Activated CD4-positive, alpha-beta T cell treated with anti-CD3 and anti-CD28 coated beads for 36 hours (primary cell): ENCODE measurements at regions of chr1 and their contacts with region 1.

Region 1: GRCh38 chr1:161766102-161766981 is at the start of gene ATF6:
- DNase-seq: peak; percentile 89
- ATAC-seq: peak; percentile 68
- H3K4me3 Mint-ChIP-seq: peak within 1 kb of the TSS; percentile 96
- H3K27ac Mint-ChIP-seq: peak within 1 kb of the TSS; percentile 99
- H3K4me1 Mint-ChIP-seq: peaks cover 49% of the 10 kb centered on the region
- H3K27me3 Mint-ChIP-seq: no peaks in the 10 kb centered on the region
- total RNA-seq, gene ATF6: 23.7 to 31.9 TPM

Region 2: DNA sequence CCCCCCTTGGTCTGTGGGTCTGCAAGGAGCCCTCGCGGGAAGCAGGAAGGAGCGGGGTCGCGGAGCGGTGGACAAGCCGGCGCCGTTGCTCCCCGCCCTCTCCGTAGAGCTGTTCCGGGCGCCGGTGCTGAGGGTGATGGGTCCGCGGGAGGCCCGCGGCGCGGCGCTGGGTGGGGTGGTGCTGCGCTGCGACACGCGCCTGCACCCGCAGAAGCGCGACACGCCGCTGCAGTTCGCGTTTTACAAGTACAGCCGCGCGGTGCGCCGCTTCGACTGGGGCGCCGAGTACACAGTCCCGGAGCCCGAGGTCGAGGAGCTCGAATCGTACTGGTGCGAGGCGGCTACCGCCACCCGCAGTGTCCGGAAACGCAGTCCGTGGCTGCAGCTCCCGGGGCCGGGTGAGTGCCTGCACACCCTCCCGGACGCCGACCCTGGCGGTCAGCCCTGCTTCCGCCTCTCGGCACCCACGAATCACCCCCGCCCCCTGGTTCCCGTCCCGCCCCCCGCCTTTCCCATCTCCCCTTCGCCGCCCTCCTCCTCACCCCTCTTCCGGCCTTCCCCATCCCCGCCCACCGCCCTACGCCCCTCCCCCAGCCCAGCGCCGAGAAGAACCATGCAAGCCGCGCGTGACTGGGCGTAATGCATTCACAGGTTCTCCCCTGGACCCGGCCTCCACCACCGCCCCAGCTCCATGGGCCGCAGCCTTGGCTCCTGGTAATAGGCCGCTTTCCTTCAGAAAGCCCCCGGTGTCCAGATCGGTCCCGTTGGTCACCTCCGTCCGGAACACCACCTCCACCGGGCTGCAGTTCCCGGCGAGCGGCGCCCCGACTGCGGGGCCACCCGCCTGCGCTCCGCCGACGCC is 39.5 kb before region 1 on chr1:
- CTCF ChIA-PET with region 1: no interaction called
- POLR2A ChIA-PET with region 1: no interaction called
- intact Hi-C with region 1: loop called in 1 of 2 experiments (anchors 1 kb)
- DNase-seq: peak; percentile 72
- ATAC-seq: peak; percentile 51
- H3K4me3 Mint-ChIP-seq: peak overlapping the region; percentile 73
- H3K27ac Mint-ChIP-seq: no peak overlapping the region
- H3K4me1 Mint-ChIP-seq: peaks cover 47% of the 10 kb centered on the region
- H3K27me3 Mint-ChIP-seq: peaks cover 44% of the 10 kb centered on the region

Region 3: DNA sequence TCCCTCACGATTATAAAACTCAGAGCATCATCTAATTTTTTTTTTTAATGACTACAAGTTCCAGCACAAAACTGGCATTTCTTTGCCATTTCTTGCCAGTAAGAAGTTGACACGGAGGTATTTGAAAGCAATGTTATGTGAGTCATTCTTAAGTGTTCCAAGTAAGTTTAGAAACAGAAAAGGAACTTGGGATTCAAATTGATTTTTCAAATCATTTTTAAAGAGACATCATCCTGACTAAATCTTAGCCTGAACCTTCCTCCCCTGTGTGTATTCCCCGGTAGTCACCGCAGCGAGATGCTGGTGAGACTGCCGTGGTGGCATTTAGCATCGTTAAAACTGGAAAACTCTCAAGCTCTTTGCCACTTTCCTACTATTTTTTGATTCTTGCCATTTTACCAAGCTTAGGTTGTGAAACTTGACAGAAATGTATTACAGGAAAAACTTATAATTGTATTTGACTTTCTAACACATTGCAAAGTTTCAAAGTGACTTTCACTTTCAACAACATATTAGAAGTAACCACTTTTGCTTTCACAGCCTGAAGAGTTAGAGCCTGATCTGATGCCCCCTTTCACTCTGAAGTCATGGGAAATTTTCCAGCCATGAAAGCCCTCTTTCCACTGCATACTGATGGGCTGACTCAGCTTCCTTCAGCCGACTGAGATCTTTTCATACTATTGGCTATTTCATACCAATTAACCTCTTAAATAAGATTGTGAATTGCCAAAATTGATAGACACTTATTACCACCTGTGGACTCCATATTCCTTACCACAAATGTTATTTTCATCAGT is 195.9 kb after region 1 on chr1:
- CTCF ChIA-PET with region 1: no interaction called
- POLR2A ChIA-PET with region 1: no interaction called
- intact Hi-C with region 1: loop called in 1 of 2 experiments (anchors 1 kb)
- DNase-seq: peak; percentile 69
- ATAC-seq: peak; percentile 96
- H3K4me3 Mint-ChIP-seq: peak overlapping the region; percentile 57
- H3K27ac Mint-ChIP-seq: peak overlapping the region; percentile 95
- H3K4me1 Mint-ChIP-seq: peaks cover 59% of the 10 kb centered on the region
- H3K27me3 Mint-ChIP-seq: no peaks in the 10 kb centered on the region

Region 4: DNA sequence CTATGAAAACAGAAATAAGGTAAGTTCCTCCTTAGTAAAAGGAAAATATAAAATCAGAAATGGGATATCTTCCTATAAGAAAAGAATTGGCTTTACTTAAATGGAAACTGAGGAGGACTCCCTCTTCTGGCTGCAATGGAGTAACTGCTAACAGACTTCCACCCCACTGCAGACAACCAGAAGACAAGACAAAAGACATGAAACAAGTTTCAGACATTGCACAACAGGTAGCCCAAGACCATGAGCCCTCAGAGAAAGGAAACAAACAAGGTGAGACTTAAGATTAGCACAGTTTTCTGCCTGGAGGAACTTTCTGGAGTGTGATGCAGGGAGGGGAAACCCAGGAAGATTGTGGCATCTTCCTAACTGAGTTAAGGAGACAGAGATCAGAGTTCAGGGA is 274.3 kb after region 1 on chr1:
- CTCF ChIA-PET with region 1: interaction called, 21 read pairs
- POLR2A ChIA-PET with region 1: no interaction called
- intact Hi-C with region 1: loop called (anchors 1 to 10 kb)
- DNase-seq: no peak
- ATAC-seq: no peak
- H3K4me3 Mint-ChIP-seq: no peak overlapping the region
- H3K27ac Mint-ChIP-seq: no peak overlapping the region
- H3K4me1 Mint-ChIP-seq: peaks cover 2% of the 10 kb centered on the region
- H3K27me3 Mint-ChIP-seq: no peaks in the 10 kb centered on the region

Region 5: GRCh38 chr1:162136760-162137159 is 370.4 kb after region 1 on chr1:
- CTCF ChIA-PET with region 1: no interaction called
- POLR2A ChIA-PET with region 1: no interaction called
- intact Hi-C with region 1: no loop called
- DNase-seq: no peak
- ATAC-seq: no peak
- H3K4me3 Mint-ChIP-seq: no peak overlapping the region
- H3K27ac Mint-ChIP-seq: no peak overlapping the region
- H3K4me1 Mint-ChIP-seq: no peaks in the 10 kb centered on the region
- H3K27me3 Mint-ChIP-seq: peaks cover 26% of the 10 kb centered on the region

Region 6: GRCh38 chr1:162561037-162561616 is 794.8 kb after region 1 on chr1:
- CTCF ChIA-PET with region 1: no interaction called
- POLR2A ChIA-PET with region 1: no interaction called
- intact Hi-C with region 1: loop called in 1 of 2 experiments (anchors 5 kb)
- DNase-seq: peak; percentile 99
- ATAC-seq: peak; percentile 98
- H3K4me3 Mint-ChIP-seq: peak overlapping the region; percentile 79
- H3K27ac Mint-ChIP-seq: peak overlapping the region; percentile 94
- H3K4me1 Mint-ChIP-seq: peaks cover 35% of the 10 kb centered on the region
- H3K27me3 Mint-ChIP-seq: no peaks in the 10 kb centered on the region

Region 7: GRCh38 chr1:163656095-163656759 is 1889.9 kb after region 1 on chr1:
- CTCF ChIA-PET with region 1: no interaction called
- POLR2A ChIA-PET with region 1: no interaction called
- intact Hi-C with region 1: no loop called
- DNase-seq: no peak
- ATAC-seq: no peak
- H3K4me3 Mint-ChIP-seq: no peak overlapping the region
- H3K27ac Mint-ChIP-seq: no peak overlapping the region
- H3K4me1 Mint-ChIP-seq: no peaks in the 10 kb centered on the region
- H3K27me3 Mint-ChIP-seq: peaks cover 2% of the 10 kb centered on the region